AG04450 (cell line): ENCODE measurements at regions of chr7 and their contacts with region 1.

Region 1: DNA sequence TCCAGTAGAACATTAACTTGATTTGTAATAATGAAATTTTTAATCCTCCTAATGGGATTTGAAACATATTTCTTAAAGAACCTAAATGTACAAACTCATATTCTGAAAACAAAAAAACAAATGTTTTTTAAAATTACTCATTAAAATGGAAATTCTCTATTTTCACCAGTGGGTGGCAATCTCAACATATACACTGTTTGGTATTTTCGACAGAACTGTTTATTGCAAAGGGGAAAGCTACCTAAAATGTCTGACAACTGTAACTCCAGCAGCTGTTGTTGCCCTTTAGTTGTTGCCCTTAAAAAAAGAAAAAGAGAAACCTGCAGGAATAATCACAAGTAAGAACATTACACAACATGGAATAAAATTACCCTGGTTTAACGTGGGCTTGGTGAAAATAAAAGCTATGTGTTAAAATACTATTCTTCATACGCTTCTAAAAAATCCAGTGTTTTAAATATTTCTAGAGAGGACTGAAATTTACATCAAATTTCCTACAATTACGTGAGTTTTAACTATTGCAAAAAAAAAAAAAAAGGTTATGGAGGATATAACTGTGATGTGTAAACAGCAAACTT is 54.5 kb downstream of the COL1A2 start:
- DNase-seq: no peak
- H3K4me3 ChIP-seq: no peak overlapping the region
- H3K27ac ChIP-seq: no peak overlapping the region
- H3K27me3 ChIP-seq: no peaks in the 10 kb centered on the region
- CTCF ChIP-seq: peak; percentile 65

Region 2: GRCh38 chr7:94620703-94621118 is 171.5 kb after region 1 on chr7:
- CTCF ChIA-PET with region 1: interaction called, 10 read pairs
- POLR2A ChIA-PET with region 1: no interaction called
- DNase-seq: peak; percentile 53
- H3K4me3 ChIP-seq: no peak overlapping the region
- H3K27ac ChIP-seq: no peak overlapping the region
- H3K27me3 ChIP-seq: no peaks in the 10 kb centered on the region
- CTCF ChIP-seq: no peak

Region 3: GRCh38 chr7:94657771-94658693 is 208.8 kb after region 1 on chr7:
- CTCF ChIA-PET with region 1: interaction called, 46 read pairs
- POLR2A ChIA-PET with region 1: interaction called, 5 read pairs
- DNase-seq: peak; percentile 73
- H3K4me3 ChIP-seq: peak overlapping the region; percentile 62
- H3K27ac ChIP-seq: no peak overlapping the region
- H3K27me3 ChIP-seq: no peaks in the 10 kb centered on the region
- CTCF ChIP-seq: no peak

Region 4: GRCh38 chr7:95199779-95200558 is 750.7 kb after region 1 on chr7:
- CTCF ChIA-PET with region 1: interaction called, 48 read pairs
- POLR2A ChIA-PET with region 1: no interaction called
- DNase-seq: peak; percentile 1
- H3K4me3 ChIP-seq: no peak overlapping the region
- H3K27ac ChIP-seq: no peak overlapping the region
- H3K27me3 ChIP-seq: no peaks in the 10 kb centered on the region
- CTCF ChIP-seq: peak; percentile 61

Region 5: DNA sequence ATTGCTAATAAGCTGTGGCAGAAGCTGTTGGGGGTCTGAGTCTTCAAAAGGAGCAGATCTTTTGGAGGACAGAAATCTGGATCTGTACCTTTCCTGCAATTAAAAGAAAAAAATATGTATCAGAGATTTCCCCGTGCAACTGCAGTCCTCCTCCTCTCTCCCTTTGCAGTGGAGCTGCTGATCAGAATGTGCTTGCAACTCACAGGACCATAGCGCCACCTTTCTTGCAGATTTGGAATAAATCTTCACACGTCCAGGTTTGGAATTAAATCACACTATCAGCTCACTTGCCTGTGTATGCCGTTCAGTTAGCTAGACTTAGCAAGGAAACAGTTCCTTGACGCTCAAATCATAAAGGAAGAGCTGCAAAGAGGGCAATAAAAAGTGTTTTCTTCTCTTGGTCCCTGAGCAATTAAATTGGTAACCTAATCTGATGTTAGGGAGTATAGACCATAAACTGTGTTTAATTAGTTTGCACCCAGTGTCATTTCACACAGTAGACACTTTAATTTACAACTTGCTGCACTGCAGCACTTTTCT is 797.7 kb after region 1 on chr7:
- CTCF ChIA-PET with region 1: interaction called, 79 read pairs
- POLR2A ChIA-PET with region 1: no interaction called
- DNase-seq: peak; percentile 18
- H3K4me3 ChIP-seq: no peak overlapping the region
- H3K27ac ChIP-seq: no peak overlapping the region
- H3K27me3 ChIP-seq: no peaks in the 10 kb centered on the region
- CTCF ChIP-seq: peak; percentile 57